H1 (cell line): ENCODE measurements at regions of chr15 and their contacts with region 1.

Region 1: DNA sequence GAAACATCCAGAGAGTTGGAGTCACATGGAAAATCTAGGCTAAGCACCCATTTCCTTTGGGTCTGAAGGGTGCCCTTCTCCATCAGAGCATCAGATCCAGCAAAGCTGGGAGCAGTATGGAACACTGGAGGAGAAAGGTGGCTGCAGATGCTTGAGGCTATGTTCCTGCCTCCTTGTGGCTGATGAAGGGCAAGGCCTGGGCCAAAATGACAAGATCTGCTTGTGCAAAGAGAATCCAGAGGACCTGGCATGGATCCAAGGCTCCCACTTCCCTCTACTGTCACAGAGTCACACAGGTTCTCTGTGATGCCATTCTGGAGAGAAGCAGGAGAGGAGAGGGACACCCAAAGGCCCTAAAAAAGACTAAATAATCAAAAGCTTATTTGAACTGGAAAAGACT is 9.2 kb upstream of the ATP8B4 start:
- DNase-seq: no peak
- H3K4me3 ChIP-seq: no peak overlapping the region
- H3K27ac ChIP-seq: no peak overlapping the region
- H3K4me1 ChIP-seq: no peaks in the 10 kb centered on the region
- H3K27me3 ChIP-seq: no peaks in the 10 kb centered on the region
- CTCF ChIP-seq: peak in 2 of 3 experiments; percentile 39 to 55; a peak in 2 of 4 replicates
- EP300 ChIP-seq: no peak
- POLR2A ChIP-seq: no peak
- RAD21 ChIP-seq: peak; percentile 17 to 36; a peak in 2 of 4 replicates

Region 2: DNA sequence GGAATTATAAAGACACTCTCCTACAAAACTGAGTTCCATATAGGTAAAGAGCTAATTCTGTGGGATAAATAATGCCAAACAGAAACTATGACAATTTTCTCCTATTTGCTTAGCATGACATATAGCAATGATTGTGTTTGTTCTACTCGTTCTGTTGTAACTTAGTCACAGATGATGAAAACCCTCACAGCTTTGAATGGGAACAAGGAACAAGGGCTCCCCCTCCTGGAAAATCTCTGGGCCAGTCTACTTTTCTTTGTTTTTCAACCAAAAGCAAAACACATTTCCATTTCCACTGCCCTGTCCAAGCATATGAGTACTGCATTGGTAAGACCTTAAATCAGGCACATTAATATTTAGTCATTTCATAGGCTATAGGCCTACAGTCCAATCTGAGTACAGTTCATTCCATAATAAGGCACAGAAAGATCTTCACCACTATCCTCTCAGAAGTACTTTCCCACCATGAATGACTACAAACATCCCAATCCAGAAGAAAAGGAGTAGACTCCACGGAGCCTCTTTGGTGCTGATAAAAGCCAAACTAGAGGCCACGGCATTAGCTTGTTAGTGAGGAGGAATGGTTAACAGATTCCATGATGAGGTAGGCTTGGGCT is 76.4 kb before region 1 on chr15:
- CTCF ChIA-PET with region 1: no interaction called
- POLR2A ChIA-PET with region 1: no interaction called
- DNase-seq: no peak
- H3K4me3 ChIP-seq: no peak overlapping the region
- H3K27ac ChIP-seq: no peak overlapping the region
- H3K4me1 ChIP-seq: no peaks in the 10 kb centered on the region
- H3K27me3 ChIP-seq: no peaks in the 10 kb centered on the region
- CTCF ChIP-seq: peak in 2 of 3 experiments; percentile 63 to 70; a peak in 3 of 4 replicates
- EP300 ChIP-seq: no peak
- POLR2A ChIP-seq: no peak
- RAD21 ChIP-seq: peak; percentile 89 to 91

Region 3: DNA sequence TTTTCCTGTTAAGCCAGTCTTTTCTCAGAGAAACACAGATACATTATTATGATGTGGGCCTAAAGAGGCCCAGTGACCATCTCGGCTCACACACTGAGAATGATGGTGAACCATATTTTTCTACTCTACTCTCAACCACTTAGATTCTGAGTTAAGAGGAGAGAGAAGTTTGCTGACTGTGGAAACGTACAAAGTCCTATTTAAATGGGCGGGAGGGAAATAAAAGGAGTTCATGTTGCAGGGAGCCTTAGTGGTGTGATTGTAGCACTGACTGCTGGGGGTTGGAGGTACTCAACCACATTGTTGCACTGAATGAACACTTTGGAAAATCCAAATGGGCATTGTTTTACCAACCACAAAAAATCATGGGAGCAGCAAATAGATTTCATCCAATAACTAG is 60.2 kb before region 1 on chr15:
- CTCF ChIA-PET with region 1: no interaction called
- POLR2A ChIA-PET with region 1: no interaction called
- DNase-seq: no peak
- H3K4me3 ChIP-seq: no peak overlapping the region
- H3K27ac ChIP-seq: no peak overlapping the region
- H3K4me1 ChIP-seq: no peaks in the 10 kb centered on the region
- H3K27me3 ChIP-seq: no peaks in the 10 kb centered on the region
- CTCF ChIP-seq: peak in 1 of 3 experiments; percentile 10; a peak in 1 of 4 replicates
- EP300 ChIP-seq: no peak
- POLR2A ChIP-seq: no peak
- RAD21 ChIP-seq: peak in 1 of 2 experiments; percentile 15; a peak in 1 of 4 replicates

Region 4: GRCh38 chr15:50145451-50145872 is 17.2 kb after region 1 on chr15:
- CTCF ChIA-PET with region 1: interaction called, 10 read pairs
- POLR2A ChIA-PET with region 1: no interaction called
- DNase-seq: peak in 1 of 2 experiments; percentile 7
- H3K4me3 ChIP-seq: no peak overlapping the region
- H3K27ac ChIP-seq: no peak overlapping the region
- H3K4me1 ChIP-seq: no peaks in the 10 kb centered on the region
- H3K27me3 ChIP-seq: no peaks in the 10 kb centered on the region
- CTCF ChIP-seq: peak in 2 of 3 experiments; percentile 39 to 46; a peak in 3 of 4 replicates
- EP300 ChIP-seq: no peak
- POLR2A ChIP-seq: no peak
- RAD21 ChIP-seq: peak; percentile 79 to 82

Region 5: DNA sequence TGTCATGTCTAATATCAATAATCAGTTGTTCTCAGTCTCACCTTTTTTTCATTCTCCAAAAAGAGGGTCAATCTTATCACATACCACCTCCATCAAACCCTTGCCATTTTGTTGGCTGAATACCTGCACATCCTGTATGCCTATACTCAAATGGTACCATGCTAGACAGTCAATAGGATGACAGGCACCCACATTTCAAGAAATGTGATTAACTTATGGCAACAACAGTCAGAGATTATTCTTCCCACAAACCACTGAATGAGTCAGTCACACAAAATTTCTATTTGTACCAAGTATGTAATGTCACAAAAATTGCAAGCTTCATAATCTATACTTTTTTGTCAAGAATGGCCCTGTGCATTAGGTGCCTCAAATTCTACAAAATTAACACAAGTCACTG is 48.6 kb after region 1 on chr15:
- CTCF ChIA-PET with region 1: no interaction called
- POLR2A ChIA-PET with region 1: no interaction called
- DNase-seq: no peak
- H3K4me3 ChIP-seq: no peak overlapping the region
- H3K27ac ChIP-seq: no peak overlapping the region
- H3K4me1 ChIP-seq: 0 out of 7 replicates have a peak, but pooled peaks cover 0 to 1% (median 0%) of the 10 kb centered on the region in 4 experiments
- H3K27me3 ChIP-seq: peaks cover 0 to 16% (median 11%) of the 10 kb centered on the region in 4 experiments; a peak in 6 of 7 replicates
- CTCF ChIP-seq: no peak
- EP300 ChIP-seq: no peak
- POLR2A ChIP-seq: no peak
- RAD21 ChIP-seq: no peak

Region 6: GRCh38 chr15:50234771-50235170 is 106.5 kb after region 1 on chr15:
- CTCF ChIA-PET with region 1: no interaction called
- POLR2A ChIA-PET with region 1: no interaction called
- DNase-seq: no peak
- H3K4me3 ChIP-seq: no peak overlapping the region
- H3K27ac ChIP-seq: no peak overlapping the region
- H3K4me1 ChIP-seq: no peaks in the 10 kb centered on the region
- H3K27me3 ChIP-seq: no peaks in the 10 kb centered on the region
- CTCF ChIP-seq: no peak
- EP300 ChIP-seq: no peak
- POLR2A ChIP-seq: no peak
- RAD21 ChIP-seq: no peak